Endothelial cell of umbilical vein (primary cell): ENCODE measurements at regions of chr1 and their contacts with region 1.

Region 1: DNA sequence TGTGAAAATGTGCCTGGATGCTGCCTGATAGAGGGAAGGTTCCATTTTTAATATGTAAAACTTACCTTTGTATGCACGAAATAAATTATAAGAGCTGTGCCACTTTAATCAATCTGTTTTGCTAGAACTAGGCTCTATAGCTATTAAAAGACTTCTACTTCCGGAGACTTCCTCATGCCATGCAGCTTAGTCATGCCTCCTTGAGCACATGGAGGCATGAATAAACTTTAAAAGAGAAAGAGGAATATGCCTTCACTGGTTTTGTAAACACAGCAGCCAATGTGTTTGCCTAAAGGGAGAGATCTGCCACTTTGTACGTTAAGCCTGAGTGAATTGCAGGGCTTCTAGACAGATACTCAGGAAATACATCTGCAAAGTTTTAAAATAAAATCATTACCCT is 604.6 kb downstream of the LRRIQ3 start:
- DNase-seq: peak; percentile 83
- H3K4me3 ChIP-seq: peak overlapping the region in 1 of 3 experiments; percentile 21
- H3K27ac ChIP-seq: peak overlapping the region; percentile 74
- H3K4me1 ChIP-seq: peaks cover 17% of the 10 kb centered on the region
- H3K27me3 ChIP-seq: no peaks in the 10 kb centered on the region
- CTCF ChIP-seq: no peak
- POLR2A ChIP-seq: no peak

Region 2: GRCh38 chr1:73604739-73605138 is 11.4 kb after region 1 on chr1:
- CTCF ChIA-PET with region 1: interaction called, 22 read pairs
- POLR2A ChIA-PET with region 1: interaction called, 3 read pairs
- dilution Hi-C with region 1: no loop called
- intact Hi-C with region 1: loop called (anchors 1 kb)
- DNase-seq: peak; percentile 77
- H3K4me3 ChIP-seq: peak overlapping the region in 1 of 3 experiments; percentile 8
- H3K27ac ChIP-seq: peak overlapping the region; percentile 51
- H3K4me1 ChIP-seq: peaks cover 11% of the 10 kb centered on the region
- H3K27me3 ChIP-seq: no peaks in the 10 kb centered on the region
- CTCF ChIP-seq: no peak
- POLR2A ChIP-seq: no peak

Region 3: DNA sequence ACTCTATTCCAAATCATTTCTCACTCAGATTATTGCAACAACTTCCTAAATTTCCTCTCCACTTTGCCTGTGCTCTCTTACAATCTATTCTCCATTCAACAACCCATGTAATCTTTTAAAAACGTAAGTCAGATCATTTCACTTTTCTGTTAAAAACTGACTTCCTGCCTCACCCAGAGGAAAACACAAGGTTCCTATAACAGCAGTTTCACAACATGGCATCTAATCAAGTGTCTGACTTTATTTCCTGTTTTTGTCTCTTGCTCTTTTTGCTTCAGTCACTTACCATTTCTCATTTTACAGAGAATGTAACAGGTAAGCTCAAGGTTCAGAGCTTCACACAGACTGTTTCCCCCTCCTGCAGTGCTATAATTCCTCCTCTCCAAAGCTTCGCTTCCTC is 43.9 kb after region 1 on chr1:
- CTCF ChIA-PET with region 1: no interaction called
- POLR2A ChIA-PET with region 1: no interaction called
- dilution Hi-C with region 1: no loop called
- intact Hi-C with region 1: loop called (anchors 1 kb)
- DNase-seq: peak; percentile 45
- H3K4me3 ChIP-seq: no peak overlapping the region
- H3K27ac ChIP-seq: no peak overlapping the region
- H3K4me1 ChIP-seq: no peaks in the 10 kb centered on the region
- H3K27me3 ChIP-seq: no peaks in the 10 kb centered on the region
- CTCF ChIP-seq: no peak
- POLR2A ChIP-seq: no peak